ENCODE measurements at regions of chr2 and their contacts with region 1.

Region 1: DNA sequence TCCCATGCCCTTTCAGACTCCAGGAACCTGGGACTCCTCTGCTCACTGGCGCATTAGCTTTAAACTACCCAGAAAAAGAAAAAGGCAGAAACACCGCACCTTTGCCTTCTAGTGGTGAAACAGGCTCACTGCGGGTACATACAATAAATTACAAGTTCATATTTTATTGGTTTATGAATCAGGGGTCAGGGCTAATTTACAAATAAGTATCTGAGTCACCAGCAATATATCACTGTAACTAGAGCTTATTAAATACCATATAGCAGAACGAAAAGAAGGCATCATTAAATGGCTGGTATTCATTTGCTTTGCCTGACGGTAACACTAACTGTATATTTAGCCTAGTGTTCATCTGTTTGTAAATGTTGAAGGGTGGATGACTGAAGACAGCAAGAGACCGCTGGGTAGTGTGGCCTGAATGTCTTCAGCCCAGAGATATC is 26.9 kb upstream of the DTNB start:
- DNase-seq: peak; percentile 26
- H3K4me3 Mint-ChIP-seq: no peak overlapping the region
- H3K27ac Mint-ChIP-seq: no peak overlapping the region
- H3K4me1 Mint-ChIP-seq: peaks cover 4% of the 10 kb centered on the region
- H3K27me3 Mint-ChIP-seq: no peaks in the 10 kb centered on the region

Region 2: DNA sequence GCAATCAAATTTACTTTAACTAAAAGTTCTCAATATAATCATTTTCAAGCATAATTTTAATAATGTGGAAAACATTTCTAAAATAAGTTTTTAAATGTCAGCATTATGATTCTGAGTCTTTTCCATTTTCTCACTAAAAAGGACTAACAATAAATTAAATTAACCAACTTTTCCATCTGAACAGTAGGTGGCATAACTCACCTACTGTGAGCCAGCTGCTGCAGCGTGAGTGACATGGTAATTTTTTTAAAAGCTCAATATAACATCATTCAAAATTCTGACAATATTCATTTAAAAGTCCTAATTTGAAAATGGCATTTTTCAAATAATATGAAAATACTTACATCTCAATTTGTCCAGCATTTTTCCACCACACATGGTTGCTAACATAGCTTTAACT is 93.3 kb before region 1 on chr2:
- CTCF ChIA-PET with region 1: interaction called, 81 read pairs
- POLR2A ChIA-PET with region 1: interaction called, 13 read pairs
- DNase-seq: no peak
- H3K4me3 Mint-ChIP-seq: no peak overlapping the region
- H3K27ac Mint-ChIP-seq: no peak overlapping the region
- H3K4me1 Mint-ChIP-seq: peaks cover 15% of the 10 kb centered on the region
- H3K27me3 Mint-ChIP-seq: no peaks in the 10 kb centered on the region

Region 3: GRCh38 chr2:25673300-25674076 is 26.8 kb before region 1 on chr2 and contains the start of gene DTNB:
- CTCF ChIA-PET with region 1: interaction called, 7 read pairs
- POLR2A ChIA-PET with region 1: interaction called, 11 read pairs
- DNase-seq: peak; percentile 86
- H3K4me3 Mint-ChIP-seq: peak within 1 kb of the TSS; percentile 82
- H3K27ac Mint-ChIP-seq: peak within 1 kb of the TSS; percentile 61
- H3K4me1 Mint-ChIP-seq: peaks cover 33% of the 10 kb centered on the region
- H3K27me3 Mint-ChIP-seq: peaks cover 15% of the 10 kb centered on the region
- total RNA-seq, gene DTNB: 27.0 to 29.8 TPM

Region 4: DNA sequence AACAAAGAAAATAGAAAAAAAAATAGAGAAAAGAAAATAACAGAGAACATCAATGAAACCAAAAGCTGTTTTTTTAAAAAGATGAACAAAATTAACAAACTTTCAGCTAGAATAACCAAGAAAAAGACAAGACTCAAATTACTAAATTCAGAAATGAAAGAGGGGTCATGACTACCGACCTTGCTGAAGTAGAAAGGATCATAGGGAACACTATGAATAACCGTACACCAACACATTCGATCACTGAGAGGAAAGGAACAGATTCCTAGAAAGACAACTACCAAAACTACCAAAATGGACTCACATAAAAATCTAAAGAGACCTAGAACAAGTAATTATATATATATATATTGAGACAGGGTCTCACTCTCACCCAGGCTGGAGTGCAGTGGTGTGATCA is 10.5 kb after region 1 on chr2:
- CTCF ChIA-PET with region 1: interaction called, 13 read pairs
- POLR2A ChIA-PET with region 1: interaction called, 3 read pairs
- DNase-seq: no peak
- H3K4me3 Mint-ChIP-seq: no peak overlapping the region
- H3K27ac Mint-ChIP-seq: no peak overlapping the region
- H3K4me1 Mint-ChIP-seq: peaks cover 14% of the 10 kb centered on the region
- H3K27me3 Mint-ChIP-seq: peaks cover 14% of the 10 kb centered on the region

Measured in activated CD4-positive, alpha-beta memory T cell treated with anti-CD3 and anti-CD28 coated beads, Interleukin-2, amount 10 ng/mL, durations not matched to agents 7 days and 5 days (primary cell).